HAP-1 (cell line): ENCODE measurements at regions of chrX and their contacts with region 1.

Region 1: DNA sequence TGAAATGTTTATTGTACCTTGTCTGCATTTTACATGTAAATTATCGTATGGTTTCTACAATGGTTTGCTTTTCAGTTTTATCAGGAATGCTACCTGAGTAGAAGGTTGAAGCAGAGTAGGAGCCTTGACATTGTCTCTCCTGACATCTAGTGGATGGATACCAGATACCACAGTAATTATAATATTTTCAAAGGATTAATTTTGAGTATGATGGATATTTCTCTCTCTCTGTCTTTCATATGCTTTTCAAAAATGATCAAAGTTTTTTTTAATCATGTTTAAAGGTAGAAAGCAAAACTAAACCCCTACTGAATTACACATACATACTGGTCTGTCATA is 109.4 kb upstream of the KLHL13 start:
- DNase-seq: peak; percentile 15 to 65
- H3K4me3 ChIP-seq: no peak overlapping the region
- H3K4me1 ChIP-seq: peaks cover 13% of the 10 kb centered on the region
- H3K27me3 ChIP-seq: no peaks in the 10 kb centered on the region

Region 2: DNA sequence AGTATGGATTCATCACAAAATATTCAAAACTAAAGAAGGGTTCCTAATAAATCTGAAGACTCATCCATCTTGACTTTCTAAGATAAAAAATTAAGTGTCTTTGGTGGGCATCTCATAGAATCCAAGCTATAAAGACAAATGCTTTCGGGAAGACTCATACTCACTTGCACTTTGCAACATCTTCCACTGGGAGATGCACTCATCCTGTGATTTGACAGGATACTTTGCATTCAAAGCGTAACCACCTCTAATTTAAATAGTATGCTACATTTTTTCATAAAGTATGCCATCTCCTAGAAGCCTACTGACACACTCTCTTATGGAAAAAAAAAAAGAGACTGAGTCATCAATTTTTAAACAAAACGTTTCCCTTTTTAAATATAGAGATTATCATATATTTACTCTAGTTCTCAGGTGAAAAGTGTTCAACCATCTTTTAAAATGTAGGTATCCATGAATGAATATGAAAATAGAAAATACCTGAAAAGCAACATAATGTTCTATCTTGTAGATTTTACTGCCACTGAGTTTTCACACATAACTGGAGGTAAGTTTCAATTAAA is 229.1 kb before region 1 on chrX:
- in situ Hi-C with region 1: loop called (anchors 25 kb)
- DNase-seq: no peak
- H3K4me3 ChIP-seq: no peak overlapping the region
- H3K4me1 ChIP-seq: no peaks in the 10 kb centered on the region
- H3K27me3 ChIP-seq: no peaks in the 10 kb centered on the region

Region 3: GRCh38 chrX:118088084-118088483 is 138.0 kb before region 1 on chrX:
- in situ Hi-C with region 1: no loop called
- DNase-seq: no peak
- H3K4me3 ChIP-seq: no peak overlapping the region
- H3K4me1 ChIP-seq: no peaks in the 10 kb centered on the region
- H3K27me3 ChIP-seq: no peaks in the 10 kb centered on the region

Region 4: GRCh38 chrX:118751950-118752783 is 526.1 kb after region 1 on chrX:
- in situ Hi-C with region 1: no loop called
- DNase-seq: no peak
- H3K4me3 ChIP-seq: no peak overlapping the region
- H3K4me1 ChIP-seq: no peaks in the 10 kb centered on the region
- H3K27me3 ChIP-seq: no peaks in the 10 kb centered on the region